ENCODE measurements at regions of chr4 and their contacts with region 1.

Region 1: DNA sequence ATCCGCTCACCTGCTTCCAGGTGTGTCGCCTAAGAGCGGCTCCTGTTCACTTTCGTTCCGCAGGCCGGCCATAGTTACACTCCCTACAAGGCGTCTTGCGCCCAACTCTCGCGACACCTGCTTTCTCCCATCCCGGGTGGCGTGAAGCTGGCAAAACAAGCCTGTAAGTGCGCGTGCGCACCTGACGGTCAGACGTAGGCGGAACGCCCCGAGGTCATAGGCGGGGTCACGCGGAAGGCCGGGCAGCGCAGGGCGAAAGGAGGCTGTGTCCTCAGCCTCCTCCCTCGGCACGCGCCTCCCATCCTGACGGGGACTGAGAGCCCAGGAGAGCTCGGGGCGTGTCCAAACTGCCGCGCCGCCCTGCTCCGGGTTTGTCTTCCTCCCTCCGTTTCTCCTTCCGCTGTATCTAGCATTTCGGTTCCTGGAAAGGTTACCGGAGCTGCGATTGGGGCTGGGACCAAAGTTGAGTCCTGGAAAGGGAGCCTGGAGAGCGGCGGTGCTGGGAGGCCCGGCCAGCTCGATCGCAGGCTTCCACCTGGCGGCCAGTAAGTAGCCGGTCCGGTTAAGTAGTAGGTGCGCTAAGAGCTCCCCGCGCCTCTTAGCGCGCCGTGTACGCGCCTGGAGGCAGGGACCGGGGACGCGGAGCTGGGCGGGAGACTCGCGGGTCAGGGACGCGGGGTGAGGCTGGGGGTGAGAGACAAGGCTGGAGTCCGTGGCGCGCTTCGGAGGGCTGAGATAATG is at the starts of genes ABHD18 and MFSD8:
- DNase-seq: peak; percentile 98 to 100 (median 99)
- H3K4me3 ChIP-seq: peak within 1 kb of the TSS; percentile 100
- H3K4me3 Mint-ChIP-seq: peak within 1 kb of the TSS; percentile 91 to 99 (median 95)
- H3K27ac ChIP-seq: peak within 1 kb of the TSS; percentile 98
- H3K27ac Mint-ChIP-seq: peak within 1 kb of the TSS; percentile 88 to 97 (median 96)
- H3K4me1 ChIP-seq: peaks cover 18% of the 10 kb centered on the region
- H3K4me1 Mint-ChIP-seq: peaks cover 32 to 65% (median 43%) of the 10 kb centered on the region in 3 donors
- H3K27me3 ChIP-seq: no peaks in the 10 kb centered on the region
- H3K27me3 Mint-ChIP-seq: peaks cover 0 to 2% of the 10 kb centered on the region in 2 donors
- total RNA-seq, gene ABHD18: 13.0 to 14.2 TPM
- total RNA-seq, gene MFSD8: 17.8 to 23.4 TPM

Region 2: GRCh38 chr4:127791391-127791790 is 173.8 kb before region 1 on chr4:
- CTCF ChIA-PET with region 1: no interaction called
- POLR2A ChIA-PET with region 1: no interaction called
- DNase-seq: no peak
- H3K4me3 ChIP-seq: no peak overlapping the region
- H3K4me3 Mint-ChIP-seq: no peak overlapping the region
- H3K27ac ChIP-seq: no peak overlapping the region
- H3K27ac Mint-ChIP-seq: peak overlapping the region in 1 of 8 donors; percentile 0
- H3K4me1 ChIP-seq: no peaks in the 10 kb centered on the region
- H3K4me1 Mint-ChIP-seq: no peaks in the 10 kb centered on the region
- H3K27me3 ChIP-seq: no peaks in the 10 kb centered on the region
- H3K27me3 Mint-ChIP-seq: peaks cover 14 to 50% of the 10 kb centered on the region in 2 donors

Region 3: DNA sequence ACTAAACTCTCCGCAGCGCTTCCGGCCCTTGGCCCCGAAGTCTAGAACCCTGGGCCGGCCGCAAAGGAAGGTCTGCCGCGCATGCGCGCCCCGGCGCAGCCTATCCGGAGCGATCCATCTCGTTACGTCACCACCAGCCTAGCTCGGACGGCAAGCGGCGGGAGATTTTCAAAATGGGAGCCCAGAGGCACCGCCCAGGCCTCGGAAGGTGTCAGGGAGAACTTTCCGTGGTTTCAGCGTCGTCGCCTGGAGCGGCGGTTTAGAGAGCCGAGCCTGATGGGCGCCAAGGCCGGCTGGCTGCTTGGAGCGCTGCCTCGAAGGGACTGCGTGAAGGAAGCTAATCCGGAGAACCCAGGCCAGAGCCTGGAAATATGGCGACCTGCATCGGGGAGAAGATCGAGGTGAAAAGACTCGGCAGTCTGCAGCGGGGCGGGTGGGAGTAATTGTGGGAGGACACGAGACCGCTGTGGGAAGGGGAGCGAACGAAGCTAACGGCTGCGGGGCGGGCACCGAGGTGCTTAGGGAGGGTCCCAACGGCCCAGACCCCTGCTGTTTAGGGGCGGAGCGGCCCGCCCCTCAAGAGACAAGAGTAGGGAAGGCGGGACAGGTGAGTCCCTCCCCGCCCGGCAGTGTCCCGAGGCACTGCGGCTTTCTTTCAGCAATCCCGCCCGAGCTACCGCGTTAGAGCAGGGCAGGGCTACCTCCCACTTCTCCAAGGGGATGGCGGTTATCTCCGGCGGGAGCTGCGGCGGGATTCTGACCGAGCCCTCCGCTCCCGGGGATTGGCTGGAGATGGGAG is 84.3 kb before region 1 on chr4 and contains the start of gene PLK4:
- CTCF ChIA-PET with region 1: interaction called, 5 read pairs
- POLR2A ChIA-PET with region 1: interaction called, 13 read pairs
- DNase-seq: peak; percentile 88 to 97 (median 94)
- H3K4me3 ChIP-seq: peak within 1 kb of the TSS; percentile 91
- H3K4me3 Mint-ChIP-seq: peak within 1 kb of the TSS; percentile 91 to 99 (median 99)
- H3K27ac ChIP-seq: peak within 1 kb of the TSS; percentile 83
- H3K27ac Mint-ChIP-seq: peak within 1 kb of the TSS; percentile 94 to 99 (median 99)
- H3K4me1 ChIP-seq: peaks cover 13% of the 10 kb centered on the region
- H3K4me1 Mint-ChIP-seq: peaks cover 22 to 38% (median 28%) of the 10 kb centered on the region in 3 donors
- H3K27me3 ChIP-seq: no peaks in the 10 kb centered on the region
- H3K27me3 Mint-ChIP-seq: peaks cover 0 to 3% of the 10 kb centered on the region in 2 donors
- total RNA-seq, gene PLK4: 29.1 to 32.6 TPM

Region 4: GRCh38 chr4:128060699-128061565 is 95.7 kb after region 1 on chr4 and contains the start of gene LARP1B:
- CTCF ChIA-PET with region 1: interaction called, 11 read pairs
- POLR2A ChIA-PET with region 1: interaction called, 56 read pairs
- DNase-seq: peak; percentile 87 to 93 (median 92)
- H3K4me3 ChIP-seq: peak within 1 kb of the TSS; percentile 66
- H3K4me3 Mint-ChIP-seq: peak within 1 kb of the TSS; percentile 84 to 90 (median 87)
- H3K27ac ChIP-seq: peak within 1 kb of the TSS; percentile 94
- H3K27ac Mint-ChIP-seq: peak within 1 kb of the TSS; percentile 84 to 95 (median 93)
- H3K4me1 ChIP-seq: peaks cover 7% of the 10 kb centered on the region
- H3K4me1 Mint-ChIP-seq: peaks cover 15 to 22% (median 17%) of the 10 kb centered on the region in 3 donors
- H3K27me3 ChIP-seq: no peaks in the 10 kb centered on the region
- H3K27me3 Mint-ChIP-seq: no peaks in the 10 kb centered on the region
- total RNA-seq, gene LARP1B: 20.3 to 22.0 TPM